ENCODE measurements at regions of chr10 and their contacts with region 1.

Region 1: GRCh38 chr10:16242859-16243613 is 193.8 kb upstream of the PTER start:
- DNase-seq: no peak
- ATAC-seq: no peak

Region 2: GRCh38 chr10:16182688-16183087 is 60.3 kb before region 1 on chr10:
- intact Hi-C with region 1: no loop called
- DNase-seq: no peak
- ATAC-seq: peak; percentile 79

Region 3: DNA sequence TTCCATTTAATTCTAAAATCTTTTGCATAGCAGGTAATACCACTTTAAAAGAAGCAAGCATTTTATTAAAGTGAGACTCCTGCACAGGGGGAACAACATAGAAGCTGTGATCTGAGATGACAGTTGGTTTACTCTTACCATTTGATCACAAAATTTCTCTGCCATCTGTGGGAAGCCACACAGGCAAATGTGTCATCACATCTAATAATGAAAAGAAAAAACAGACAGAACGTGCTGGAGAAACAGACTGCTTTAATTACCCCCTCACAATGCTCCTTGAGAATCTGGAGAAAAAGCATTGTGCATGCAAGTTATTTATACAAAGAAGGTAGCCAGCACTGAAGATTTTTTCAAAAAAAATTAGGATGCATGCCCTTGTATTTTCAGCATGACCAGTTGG is 28.5 kb after region 1 on chr10:
- intact Hi-C with region 1: loop called (anchors 1 kb)
- DNase-seq: no peak
- ATAC-seq: no peak

Measured in sciatic nerve (tissue), 2 donors.